Lower leg skin (tissue), 4 donors: ENCODE measurements at regions of chr1 and their contacts with region 1.

Region 1: DNA sequence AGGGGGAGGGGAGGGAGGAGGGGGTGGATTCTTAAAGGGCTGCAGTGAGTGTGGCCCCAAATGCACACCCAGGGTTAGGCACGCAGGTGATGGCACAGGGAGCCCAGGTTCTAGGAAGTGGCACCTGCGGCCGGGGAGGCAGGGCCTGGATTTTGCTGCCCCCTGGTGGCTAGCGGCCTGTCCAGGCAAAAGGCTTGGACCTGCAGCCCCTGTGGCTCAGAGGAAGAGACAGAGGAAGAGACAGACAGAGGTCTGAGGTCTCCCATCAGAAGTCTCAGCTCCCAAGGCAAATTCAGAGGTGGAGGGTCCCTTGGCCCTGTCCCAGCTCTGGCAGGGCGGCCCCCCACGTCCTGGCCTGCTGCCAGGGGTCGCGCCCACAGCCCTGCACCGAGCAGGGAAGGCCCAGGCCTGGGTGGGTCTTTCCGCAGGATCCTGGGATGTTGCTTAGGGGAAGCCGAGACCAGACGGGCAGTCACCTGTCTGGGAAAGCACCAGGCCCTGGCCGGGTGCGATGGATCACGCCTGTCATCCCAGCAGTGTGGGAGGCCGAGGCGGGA is 8.1 kb upstream of the TNFRSF14 start:
- DNase-seq: peak; percentile 76 to 96
- H3K4me3 ChIP-seq: no peak overlapping the region
- CTCF ChIP-seq: peak in 1 of 3 donors; percentile 69
- POLR2A ChIP-seq: no peak

Region 2: GRCh38 chr1:2414083-2414958 is 133.8 kb before region 1 on chr1:
- intact Hi-C with region 1: loop called (anchors 1 kb)
- DNase-seq: peak; percentile 61 to 96
- H3K4me3 ChIP-seq: no peak overlapping the region
- CTCF ChIP-seq: peak in 1 of 3 donors; percentile 63
- POLR2A ChIP-seq: no peak